ENCODE measurements at regions of chr21 and their contacts with region 1.

Region 1: DNA sequence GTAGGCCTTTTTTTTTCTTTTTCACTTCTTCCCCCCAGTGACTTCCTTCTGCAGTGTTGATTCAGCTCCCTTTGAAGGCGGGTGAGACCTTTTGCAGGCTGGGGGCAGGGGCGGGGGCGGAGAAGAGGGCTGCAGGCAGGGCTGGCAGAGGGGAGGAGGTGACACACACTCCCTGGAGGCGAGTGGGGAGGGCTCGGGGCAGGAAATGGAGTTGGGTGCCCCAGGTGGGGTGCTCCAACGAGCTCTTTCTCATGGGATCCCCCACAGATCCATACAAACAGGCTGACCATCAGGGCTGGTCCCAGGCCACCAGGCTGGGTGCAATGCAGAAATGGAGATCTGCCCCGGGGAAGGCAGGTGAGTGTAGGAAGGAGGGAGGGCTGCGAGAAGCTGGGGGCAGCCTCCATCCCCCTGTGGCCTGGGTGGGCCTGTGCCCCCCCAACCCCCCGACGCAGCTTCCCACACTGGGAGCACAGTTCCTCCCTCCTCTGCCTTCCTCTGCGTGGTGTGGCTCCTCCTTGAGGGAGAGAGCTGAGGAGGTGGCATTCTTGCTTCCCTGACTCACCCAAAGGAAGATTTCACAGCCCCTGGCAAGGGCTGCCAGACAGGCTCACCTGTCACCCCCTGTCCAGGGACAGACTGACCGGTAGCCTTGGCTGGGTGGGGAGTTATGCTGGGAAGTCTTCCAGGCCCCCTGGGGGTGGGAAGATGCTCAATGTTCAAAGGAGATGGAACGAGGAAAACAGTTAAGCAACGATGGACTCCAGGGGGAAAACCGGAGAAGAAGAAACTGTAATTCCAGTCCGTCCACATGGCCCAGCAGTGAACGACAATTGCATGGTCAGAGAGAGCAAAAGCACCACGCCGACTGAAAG is 7.1 kb upstream of the ITGB2 start:
- DNase-seq: peak in 2 of 3 donors; percentile 84 to 87
- H3K4me3 ChIP-seq: peak overlapping the region in 5 of 7 experiments; percentile 25 to 59 (median 40)
- H3K27ac ChIP-seq: peak overlapping the region in 1 of 2 experiments; percentile 43
- H3K4me1 ChIP-seq: peaks cover 13 to 96% (median 79%) of the 10 kb centered on the region in 4 experiments
- H3K27me3 ChIP-seq: peaks cover 0 to 2% (median 0%) of the 10 kb centered on the region in 5 experiments

Region 2: DNA sequence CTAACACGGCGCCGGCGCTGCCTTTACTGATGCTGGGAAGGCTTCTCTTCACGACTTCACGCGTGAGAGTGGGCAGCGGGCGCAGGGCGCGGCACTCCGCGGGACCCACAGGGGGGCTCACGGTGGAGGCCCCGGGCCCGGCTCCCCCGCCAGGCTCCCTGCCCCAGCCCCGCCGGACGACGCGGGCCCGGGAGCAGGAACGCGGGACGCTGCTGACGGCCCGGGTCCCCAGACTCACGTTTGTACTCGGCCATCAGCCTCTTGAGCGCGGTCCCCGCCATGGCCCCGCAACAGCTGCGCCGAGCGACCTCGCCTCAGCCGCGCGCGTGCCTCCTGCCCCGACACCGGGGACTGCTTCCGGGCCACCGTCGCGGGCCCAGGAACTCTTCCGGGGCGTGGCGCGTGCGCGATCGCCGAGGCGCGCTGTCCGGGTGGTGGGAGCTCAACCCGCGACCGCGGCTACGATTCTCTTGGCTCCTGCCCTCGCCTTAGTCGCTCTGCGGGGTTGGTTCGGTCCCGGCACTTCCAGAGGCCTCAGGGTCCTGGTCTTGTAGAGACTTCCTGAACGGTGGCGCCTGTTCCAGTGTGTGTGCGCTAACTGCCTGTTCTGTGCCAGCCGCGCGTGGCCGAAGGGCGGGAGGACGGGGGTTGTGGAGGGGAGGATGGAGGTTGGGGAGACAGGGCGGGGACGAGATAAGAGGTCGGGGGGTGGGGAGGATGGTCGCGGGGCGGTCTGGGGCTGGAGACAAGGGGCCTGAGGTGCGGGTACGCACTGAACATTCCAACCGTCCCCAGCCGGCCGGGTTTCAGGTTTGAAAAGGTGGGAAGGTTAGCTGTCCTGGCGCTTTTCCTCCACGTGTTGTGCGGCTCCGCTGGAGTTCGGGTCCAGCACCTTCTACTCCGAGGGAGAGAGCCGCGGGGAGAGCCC is 126.1 kb before region 1 on chr21 and contains the start of gene UBE2G2:
- CTCF ChIA-PET with region 1: interaction called, 14 read pairs
- POLR2A ChIA-PET with region 1: no interaction called
- DNase-seq: peak; percentile 75 to 88 (median 82)
- H3K4me3 ChIP-seq: peak within 1 kb of the TSS; percentile 63 to 96 (median 81)
- H3K27ac ChIP-seq: peak within 1 kb of the TSS; percentile 27 to 79
- H3K4me1 ChIP-seq: peaks cover 8 to 28% (median 28%) of the 10 kb centered on the region in 4 experiments
- H3K27me3 ChIP-seq: no peaks in the 10 kb centered on the region

Region 3: GRCh38 chr21:44892536-44893277 is 35.1 kb before region 1 on chr21:
- CTCF ChIA-PET with region 1: interaction called, 42 read pairs
- POLR2A ChIA-PET with region 1: no interaction called
- DNase-seq: peak in 2 of 3 donors; percentile 63 to 74
- H3K4me3 ChIP-seq: no peak overlapping the region
- H3K27ac ChIP-seq: no peak overlapping the region
- H3K4me1 ChIP-seq: peaks cover 0 to 4% (median 0%) of the 10 kb centered on the region in 4 experiments
- H3K27me3 ChIP-seq: no peaks in the 10 kb centered on the region

Region 4: DNA sequence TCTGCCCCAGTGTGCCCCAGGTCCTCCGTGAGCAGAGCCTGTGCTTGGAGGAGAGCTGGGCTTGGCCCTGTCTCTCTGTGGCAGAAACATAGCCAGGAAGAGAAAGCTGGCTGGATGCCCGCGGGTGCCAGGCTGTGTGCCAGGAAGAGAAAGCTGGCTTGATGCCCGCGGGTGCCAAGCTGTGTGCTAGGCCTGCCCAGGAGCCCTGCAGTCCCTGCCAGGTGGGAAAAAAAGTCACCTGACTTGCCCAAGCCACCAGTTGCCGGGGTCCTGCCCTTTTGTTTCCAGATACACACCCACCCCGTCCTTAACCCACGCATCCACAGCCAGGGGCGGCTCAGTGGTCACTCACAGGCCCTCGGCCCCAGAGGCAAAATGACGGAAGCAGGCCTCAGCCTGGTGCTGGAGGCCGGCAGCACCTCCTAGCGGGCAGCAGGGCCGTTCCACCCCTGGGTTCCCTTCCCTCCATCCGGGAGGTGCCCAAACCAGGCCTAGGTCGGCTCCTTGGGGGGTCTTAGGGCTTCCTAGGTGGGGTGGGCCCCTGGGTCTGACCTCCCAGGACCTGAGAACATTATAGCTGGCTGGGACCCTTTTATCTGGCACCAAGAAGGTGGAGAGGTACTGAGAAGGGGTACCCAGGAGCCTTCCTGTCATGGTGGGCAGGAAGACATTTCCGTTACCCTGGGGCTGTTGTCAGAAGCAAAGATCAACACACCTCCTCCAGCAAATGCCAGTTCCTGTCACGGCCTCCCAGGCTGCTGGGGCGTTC is 16.3 kb before region 1 on chr21:
- CTCF ChIA-PET with region 1: interaction called, 40 read pairs
- POLR2A ChIA-PET with region 1: interaction called, 3 read pairs
- DNase-seq: peak; percentile 51 to 75 (median 65)
- H3K4me3 ChIP-seq: peak overlapping the region in 4 of 7 experiments; percentile 11 to 56 (median 26)
- H3K27ac ChIP-seq: peak overlapping the region; percentile 58 to 76
- H3K4me1 ChIP-seq: peaks cover 8 to 86% (median 83%) of the 10 kb centered on the region in 4 experiments
- H3K27me3 ChIP-seq: no peaks in the 10 kb centered on the region

Region 5: DNA sequence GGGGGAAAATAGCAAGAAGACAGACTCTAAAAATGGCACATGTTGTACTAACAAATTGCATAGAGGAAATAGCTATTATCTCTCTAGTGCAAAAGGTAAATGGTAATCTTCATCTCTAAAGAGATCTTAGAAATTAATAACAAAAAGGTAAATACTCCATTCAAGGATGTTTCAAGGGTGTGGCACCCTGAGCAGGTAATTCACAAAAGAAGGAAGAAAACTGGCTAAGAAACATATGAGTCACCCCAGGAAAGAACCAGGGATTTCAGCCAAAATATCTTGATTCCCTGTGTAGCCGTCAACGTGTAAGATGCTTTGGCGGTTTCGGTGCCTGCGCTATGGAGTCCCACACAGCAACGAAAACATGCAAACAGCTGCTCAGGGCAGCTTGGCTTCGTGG is 10.9 kb before region 1 on chr21:
- CTCF ChIA-PET with region 1: interaction called, 40 read pairs
- POLR2A ChIA-PET with region 1: no interaction called
- DNase-seq: no peak
- H3K4me3 ChIP-seq: no peak overlapping the region
- H3K27ac ChIP-seq: no peak overlapping the region
- H3K4me1 ChIP-seq: peaks cover 4 to 77% (median 72%) of the 10 kb centered on the region in 4 experiments
- H3K27me3 ChIP-seq: no peaks in the 10 kb centered on the region

Region 6: GRCh38 chr21:44943005-44943685 is 15.3 kb after region 1 on chr21:
- CTCF ChIA-PET with region 1: interaction called, 11 read pairs
- POLR2A ChIA-PET with region 1: interaction called, 4 read pairs
- DNase-seq: no peak
- H3K4me3 ChIP-seq: no peak overlapping the region
- H3K27ac ChIP-seq: no peak overlapping the region
- H3K4me1 ChIP-seq: peaks cover 11 to 36% (median 33%) of the 10 kb centered on the region in 4 experiments
- H3K27me3 ChIP-seq: no peaks in the 10 kb centered on the region